Mammary epithelial cell (primary cell): ENCODE measurements at regions of chr17 and their contacts with region 1.

Region 1: DNA sequence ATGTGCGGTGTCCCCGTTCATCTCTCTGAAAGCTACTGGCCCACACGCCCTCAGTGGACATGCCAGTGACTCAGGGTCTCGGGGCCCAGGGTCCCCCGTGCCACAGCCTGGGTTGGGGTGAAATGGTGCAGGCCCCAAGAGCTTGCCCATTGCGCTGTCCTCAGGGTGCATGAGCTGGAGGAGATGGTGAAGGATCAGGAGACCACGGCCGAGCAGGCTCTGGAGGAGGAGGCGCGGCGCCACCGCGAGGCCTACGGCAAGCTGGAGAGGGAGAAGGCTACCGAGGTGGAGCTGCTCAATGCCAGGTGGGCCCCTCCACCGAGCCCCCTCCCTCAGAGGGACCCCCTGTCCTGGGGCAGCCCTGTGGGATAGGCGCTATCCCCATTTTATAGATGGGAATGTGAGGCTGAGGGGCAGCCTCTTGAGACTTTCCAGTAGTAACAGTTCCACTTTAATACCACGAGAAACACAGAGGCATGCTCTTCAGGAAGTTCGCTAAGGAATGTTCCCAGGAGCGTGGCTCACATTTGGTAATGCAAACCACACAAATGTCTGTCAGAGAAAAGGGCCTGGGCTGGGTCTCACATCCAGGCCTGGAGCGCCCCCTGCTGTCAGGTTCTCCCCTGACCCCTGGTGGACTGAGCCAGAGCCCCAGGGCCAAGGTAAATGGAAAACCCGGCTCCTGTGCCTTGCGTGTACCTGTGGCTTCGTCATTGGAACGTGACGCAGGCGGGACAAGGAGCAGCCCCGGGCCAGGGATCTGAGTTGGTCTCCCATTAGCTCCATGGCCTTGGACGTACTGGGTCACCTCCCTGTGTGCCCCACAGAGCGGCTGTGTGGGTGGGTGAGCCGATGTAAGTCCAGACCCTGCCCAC is 133.7 kb downstream of the RAB11FIP4 start:
- DNase-seq: peak; percentile 81
- H3K4me3 ChIP-seq: no peak overlapping the region
- H3K27ac ChIP-seq: no peak overlapping the region
- H3K4me1 ChIP-seq: peaks cover 5% of the 10 kb centered on the region
- H3K27me3 ChIP-seq: no peaks in the 10 kb centered on the region
- CTCF ChIP-seq: peak; percentile 91 to 98

Region 2: DNA sequence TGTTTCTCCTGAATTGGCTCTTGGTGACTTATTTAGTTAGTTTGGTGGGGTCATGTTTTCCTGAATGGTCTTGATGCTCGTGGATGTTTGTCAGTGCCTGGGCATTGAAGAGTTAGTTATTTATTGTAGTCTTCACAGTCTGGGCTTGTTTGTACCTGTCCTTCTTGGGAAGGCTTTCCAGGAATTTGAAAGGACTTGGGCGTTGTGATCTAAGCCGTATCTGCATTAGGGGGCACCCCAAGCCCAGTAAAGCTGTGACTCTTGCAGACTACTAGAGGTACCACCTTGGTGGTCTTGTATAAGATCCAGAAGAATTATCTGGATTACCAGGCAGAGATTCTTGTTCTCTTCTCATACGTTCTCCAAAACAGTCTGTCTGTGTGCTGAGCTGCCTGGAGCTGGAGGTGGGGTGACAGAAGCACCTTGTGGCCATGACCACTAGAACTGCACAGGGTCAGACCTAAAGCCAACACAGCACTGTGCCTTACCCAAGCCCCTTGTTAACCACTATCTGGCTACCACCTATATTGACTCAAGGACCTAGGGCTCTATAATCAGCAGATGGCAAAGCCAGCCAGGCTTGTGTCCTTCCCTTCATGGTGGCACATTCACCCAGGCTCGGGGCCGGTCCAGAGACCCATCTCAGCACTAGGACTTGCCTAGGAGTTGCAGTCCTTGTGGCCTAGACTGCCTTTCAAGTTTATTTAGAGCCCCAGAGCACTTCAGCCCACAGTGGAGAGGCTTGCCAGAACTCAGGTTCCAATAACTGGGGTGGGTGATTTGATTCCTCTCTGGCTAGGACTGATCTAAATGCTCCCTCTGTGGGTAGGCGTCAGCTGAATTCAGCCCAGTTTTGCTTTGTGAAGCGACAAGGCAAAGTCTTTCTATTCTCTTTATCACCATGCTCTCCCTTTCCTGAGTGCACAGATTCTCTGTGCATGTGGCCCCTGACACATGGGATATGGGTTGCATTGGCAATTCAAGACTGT is 543.3 kb before region 1 on chr17:
- CTCF ChIA-PET with region 1: no interaction called
- dilution Hi-C with region 1: no loop called
- in situ Hi-C with region 1: no loop called
- intact Hi-C with region 1: loop called (anchors 10 kb)
- DNase-seq: peak; percentile 39
- H3K4me3 ChIP-seq: no peak overlapping the region
- H3K27ac ChIP-seq: no peak overlapping the region
- H3K4me1 ChIP-seq: peaks cover 9% of the 10 kb centered on the region
- H3K27me3 ChIP-seq: no peaks in the 10 kb centered on the region
- CTCF ChIP-seq: no peak

Region 3: DNA sequence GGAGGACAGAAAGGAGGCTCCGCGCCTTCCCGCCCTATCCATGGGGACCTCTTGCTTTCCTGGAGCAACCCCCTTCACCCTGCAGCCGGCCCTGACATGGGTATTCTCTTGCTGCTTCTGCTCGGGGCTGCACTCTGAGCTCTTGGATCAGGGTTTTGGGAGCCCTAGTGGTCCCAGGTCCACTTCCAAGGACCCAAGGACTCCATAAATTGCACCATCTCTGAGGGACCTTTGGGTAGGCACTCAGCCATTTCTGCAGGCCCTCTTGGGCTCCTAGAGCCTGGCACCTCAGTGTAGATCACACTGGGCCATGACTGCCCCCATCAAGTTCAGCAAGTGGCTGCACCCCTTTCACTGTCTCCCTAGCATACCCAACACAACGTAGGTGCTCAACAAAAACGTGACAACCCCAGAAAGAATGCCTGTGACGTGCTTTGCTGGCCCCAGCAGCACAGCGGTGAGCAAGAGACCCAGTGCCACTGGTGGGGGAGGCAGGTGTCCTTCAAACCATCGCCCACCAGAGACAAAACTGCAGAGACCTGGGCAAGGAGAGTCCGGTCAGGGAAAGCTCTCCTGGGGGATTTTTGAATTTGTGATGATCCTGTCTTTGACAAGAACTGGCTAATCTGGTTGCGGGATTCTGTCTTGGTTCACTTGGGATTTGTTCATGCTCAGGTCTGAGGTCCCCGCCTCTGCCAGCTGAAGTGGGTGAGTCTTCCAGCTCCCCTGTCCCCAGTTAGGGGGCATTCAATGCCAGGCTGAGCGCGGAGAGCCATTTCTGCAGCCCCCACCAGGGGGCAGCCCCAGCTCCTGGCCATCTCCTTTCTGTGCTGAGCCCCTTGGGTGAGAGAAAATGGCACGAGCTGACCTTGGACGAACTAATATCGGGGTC is 136.1 kb before region 1 on chr17:
- CTCF ChIA-PET with region 1: no interaction called
- dilution Hi-C with region 1: no loop called
- in situ Hi-C with region 1: no loop called
- intact Hi-C with region 1: loop called (anchors 1 kb)
- DNase-seq: no peak
- H3K4me3 ChIP-seq: no peak overlapping the region
- H3K27ac ChIP-seq: no peak overlapping the region
- H3K4me1 ChIP-seq: peaks cover 9% of the 10 kb centered on the region
- H3K27me3 ChIP-seq: peaks cover 6% of the 10 kb centered on the region
- CTCF ChIP-seq: peak; percentile 35 to 56

Region 4: GRCh38 chr17:31446195-31446967 is 78.8 kb before region 1 on chr17:
- CTCF ChIA-PET with region 1: no interaction called
- dilution Hi-C with region 1: no loop called
- in situ Hi-C with region 1: loop called in 1 of 2 experiments (anchors 5 kb)
- intact Hi-C with region 1: loop called (anchors 2 kb)
- DNase-seq: no peak
- H3K4me3 ChIP-seq: no peak overlapping the region
- H3K27ac ChIP-seq: no peak overlapping the region
- H3K4me1 ChIP-seq: no peaks in the 10 kb centered on the region
- H3K27me3 ChIP-seq: no peaks in the 10 kb centered on the region
- CTCF ChIP-seq: peak in 1 of 2 donors; percentile 28

Region 5: GRCh38 chr17:31609996-31610910 is 85.1 kb after region 1 on chr17:
- CTCF ChIA-PET with region 1: no interaction called
- dilution Hi-C with region 1: no loop called
- in situ Hi-C with region 1: no loop called
- intact Hi-C with region 1: no loop called
- DNase-seq: no peak
- H3K4me3 ChIP-seq: no peak overlapping the region
- H3K27ac ChIP-seq: no peak overlapping the region
- H3K4me1 ChIP-seq: peaks cover 3% of the 10 kb centered on the region
- H3K27me3 ChIP-seq: no peaks in the 10 kb centered on the region
- CTCF ChIP-seq: no peak

Region 6: GRCh38 chr17:31900877-31901276 is 375.7 kb after region 1 on chr17:
- CTCF ChIA-PET with region 1: no interaction called
- dilution Hi-C with region 1: no loop called
- in situ Hi-C with region 1: no loop called
- intact Hi-C with region 1: loop called (anchors 1 kb)
- DNase-seq: peak; percentile 38
- H3K4me3 ChIP-seq: peak overlapping the region; percentile 66 to 97 (median 83)
- H3K27ac ChIP-seq: peak overlapping the region; percentile 86
- H3K4me1 ChIP-seq: peaks cover 4% of the 10 kb centered on the region
- H3K27me3 ChIP-seq: no peaks in the 10 kb centered on the region
- CTCF ChIP-seq: no peak